Natural killer cell (primary cell): ENCODE measurements at regions of chr3 and their contacts with region 1.

Region 1: DNA sequence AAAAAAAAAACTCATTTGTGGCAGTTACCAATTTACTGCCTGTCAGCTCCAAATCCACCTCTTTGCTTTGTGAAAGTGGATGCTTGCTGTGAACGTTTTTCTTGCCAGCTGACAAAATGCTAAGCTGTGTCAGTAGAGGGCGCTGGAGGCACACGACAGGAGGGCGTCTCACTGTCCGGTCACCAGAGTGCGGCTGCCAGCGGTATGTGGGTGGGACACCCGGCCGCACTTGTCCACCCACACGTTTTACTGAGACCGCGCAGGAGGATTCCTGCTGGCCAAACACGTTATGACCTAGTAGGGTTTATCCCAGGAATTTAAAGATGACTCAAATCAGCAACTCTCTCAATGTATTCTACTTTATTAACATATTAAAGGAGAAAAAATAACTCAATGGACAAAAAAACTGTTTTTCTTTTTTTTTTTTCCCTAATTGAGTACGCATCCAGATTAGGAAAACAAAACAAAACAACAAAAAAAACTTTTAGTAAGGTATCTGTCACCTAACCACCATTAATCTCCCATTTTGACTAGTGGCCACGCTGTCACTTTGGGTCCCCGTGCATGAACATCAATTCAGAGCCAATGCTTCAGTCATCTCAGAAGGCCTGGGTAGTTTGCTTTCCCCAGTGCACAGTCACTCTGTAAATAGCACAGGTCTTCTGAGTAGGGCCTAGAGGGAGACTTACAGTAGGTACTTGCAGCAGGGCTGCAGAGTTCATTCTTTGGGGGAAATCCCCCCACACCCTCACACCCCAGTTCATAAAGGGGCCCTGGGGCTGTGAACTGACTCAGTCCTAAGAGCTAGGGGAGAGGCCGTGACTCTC is 43.8 kb upstream of the RPL35A start:
- DNase-seq: peak; percentile 68 to 88
- ATAC-seq: peak; percentile 88 to 91 (median 89)
- H3K4me3 ChIP-seq: no peak overlapping the region
- H3K4me3 Mint-ChIP-seq: no peak overlapping the region
- H3K27ac ChIP-seq: no peak overlapping the region
- H3K27ac Mint-ChIP-seq: peak overlapping the region in 1 of 2 donors; percentile 13
- H3K4me1 ChIP-seq: peaks cover 4% of the 10 kb centered on the region
- H3K4me1 Mint-ChIP-seq: peaks cover 0 to 6% of the 10 kb centered on the region in 2 donors
- H3K27me3 ChIP-seq: no peaks in the 10 kb centered on the region
- H3K27me3 Mint-ChIP-seq: peaks cover 0 to 2% of the 10 kb centered on the region in 2 donors
- CTCF ChIP-seq: peak; percentile 95

Region 2: DNA sequence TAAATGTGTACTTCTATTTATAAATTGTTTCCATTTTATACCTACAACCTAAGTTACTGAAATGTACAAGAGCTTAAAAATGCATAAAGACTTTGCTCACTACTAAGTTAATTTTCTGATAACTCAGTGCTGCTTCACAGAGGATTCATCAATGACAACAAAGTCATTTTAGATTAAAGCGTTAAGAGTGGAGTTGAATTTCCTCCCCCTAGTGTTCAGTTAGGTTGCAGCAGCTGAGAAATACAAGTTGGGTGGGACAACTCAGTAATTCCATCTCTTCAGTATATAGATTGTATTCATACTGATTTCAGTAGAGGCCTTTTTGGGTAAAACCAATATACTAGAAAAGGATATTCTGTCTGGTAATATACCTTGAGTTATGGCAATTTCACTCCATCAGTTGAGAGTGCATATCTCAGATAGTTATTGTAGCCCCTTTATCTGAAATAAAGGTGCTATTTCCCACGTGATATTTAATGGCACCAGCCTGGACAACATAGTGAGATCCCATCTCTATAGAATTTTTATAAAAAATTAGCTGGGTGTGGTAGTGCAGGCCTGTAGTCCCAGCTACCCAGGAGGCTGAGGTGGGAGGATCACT is 36.8 kb after region 1 on chr3:
- intact Hi-C with region 1: loop called (anchors 1 kb)
- DNase-seq: peak in 1 of 2 donors; percentile 72
- ATAC-seq: peak; percentile 54 to 88 (median 63)
- H3K4me3 ChIP-seq: no peak overlapping the region
- H3K4me3 Mint-ChIP-seq: no peak overlapping the region
- H3K27ac ChIP-seq: no peak overlapping the region
- H3K27ac Mint-ChIP-seq: no peak overlapping the region
- H3K4me1 ChIP-seq: no peaks in the 10 kb centered on the region
- H3K4me1 Mint-ChIP-seq: no peaks in the 10 kb centered on the region
- H3K27me3 ChIP-seq: no peaks in the 10 kb centered on the region
- H3K27me3 Mint-ChIP-seq: no peaks in the 10 kb centered on the region
- CTCF ChIP-seq: peak; percentile 68

Region 3: DNA sequence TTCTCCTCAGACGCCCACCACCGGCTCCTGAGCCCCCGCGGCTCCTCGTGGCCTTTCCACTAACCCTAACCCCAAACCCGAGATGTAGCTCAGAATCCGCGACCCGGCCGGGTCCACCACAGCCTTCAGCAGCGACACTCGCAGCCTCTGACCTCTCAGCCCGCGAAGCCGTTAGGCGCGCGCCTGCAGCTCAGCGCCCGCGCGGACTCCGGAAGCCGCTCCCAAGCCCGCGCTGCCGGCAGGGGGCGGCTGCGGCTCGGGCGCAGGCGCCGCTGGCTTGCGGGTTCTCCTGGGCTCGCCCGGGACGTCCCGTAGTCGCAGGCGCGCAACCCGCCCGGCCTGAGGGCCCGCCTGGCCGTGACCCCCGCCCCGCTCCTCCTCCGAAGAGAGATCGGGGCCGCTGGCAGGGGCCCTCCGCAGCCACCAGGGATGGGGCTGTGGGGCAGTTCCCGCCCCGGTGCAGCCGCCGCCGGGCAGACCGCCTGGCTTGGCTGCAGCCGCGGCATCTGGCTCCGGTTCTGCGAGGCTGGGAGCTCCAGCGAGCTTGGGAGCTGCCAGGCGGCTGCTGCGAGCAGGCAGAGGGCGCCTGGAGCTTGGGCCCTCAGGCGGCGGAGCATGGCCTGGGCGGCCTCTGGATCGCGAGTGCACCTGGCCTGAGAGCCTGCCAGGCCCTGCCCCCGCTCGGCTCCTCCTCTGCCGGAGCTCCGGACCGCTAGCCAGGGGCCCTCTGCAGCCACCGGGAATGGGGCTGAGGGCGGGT is 174.5 kb after region 1 on chr3:
- intact Hi-C with region 1: loop called (anchors 10 kb)
- DNase-seq: peak; percentile 68 to 87
- ATAC-seq: peak; percentile 92 to 96 (median 93)
- H3K4me3 ChIP-seq: peak overlapping the region; percentile 43
- H3K4me3 Mint-ChIP-seq: peak overlapping the region; percentile 78
- H3K27ac ChIP-seq: no peak overlapping the region
- H3K27ac Mint-ChIP-seq: no peak overlapping the region
- H3K4me1 ChIP-seq: peaks cover 16% of the 10 kb centered on the region
- H3K4me1 Mint-ChIP-seq: no peaks in the 10 kb centered on the region
- H3K27me3 ChIP-seq: peaks cover 36% of the 10 kb centered on the region
- H3K27me3 Mint-ChIP-seq: peaks cover 37 to 52% of the 10 kb centered on the region in 2 donors
- CTCF ChIP-seq: peak; percentile 59